ENCODE measurements at regions of chr14 and their contacts with region 1.

Region 1: GRCh38 chr14:101120641-101121507 is 217.4 kb upstream of the RTL1 start:
- DNase-seq: peak; percentile 43
- ATAC-seq: peak; percentile 85
- H3K4me3 Mint-ChIP-seq: peak overlapping the region; percentile 91
- H3K27ac Mint-ChIP-seq: peak overlapping the region; percentile 96
- H3K4me1 Mint-ChIP-seq: peaks cover 33% of the 10 kb centered on the region
- H3K27me3 Mint-ChIP-seq: no peaks in the 10 kb centered on the region
- CTCF ChIP-seq: no peak

Region 2: GRCh38 chr14:100994082-100994481 is 126.8 kb before region 1 on chr14:
- CTCF ChIA-PET with region 1: no interaction called
- POLR2A ChIA-PET with region 1: no interaction called
- intact Hi-C with region 1: no loop called
- DNase-seq: no peak
- ATAC-seq: no peak
- H3K4me3 Mint-ChIP-seq: no peak overlapping the region
- H3K27ac Mint-ChIP-seq: no peak overlapping the region
- H3K4me1 Mint-ChIP-seq: no peaks in the 10 kb centered on the region
- H3K27me3 Mint-ChIP-seq: no peaks in the 10 kb centered on the region
- CTCF ChIP-seq: no peak

Region 3: DNA sequence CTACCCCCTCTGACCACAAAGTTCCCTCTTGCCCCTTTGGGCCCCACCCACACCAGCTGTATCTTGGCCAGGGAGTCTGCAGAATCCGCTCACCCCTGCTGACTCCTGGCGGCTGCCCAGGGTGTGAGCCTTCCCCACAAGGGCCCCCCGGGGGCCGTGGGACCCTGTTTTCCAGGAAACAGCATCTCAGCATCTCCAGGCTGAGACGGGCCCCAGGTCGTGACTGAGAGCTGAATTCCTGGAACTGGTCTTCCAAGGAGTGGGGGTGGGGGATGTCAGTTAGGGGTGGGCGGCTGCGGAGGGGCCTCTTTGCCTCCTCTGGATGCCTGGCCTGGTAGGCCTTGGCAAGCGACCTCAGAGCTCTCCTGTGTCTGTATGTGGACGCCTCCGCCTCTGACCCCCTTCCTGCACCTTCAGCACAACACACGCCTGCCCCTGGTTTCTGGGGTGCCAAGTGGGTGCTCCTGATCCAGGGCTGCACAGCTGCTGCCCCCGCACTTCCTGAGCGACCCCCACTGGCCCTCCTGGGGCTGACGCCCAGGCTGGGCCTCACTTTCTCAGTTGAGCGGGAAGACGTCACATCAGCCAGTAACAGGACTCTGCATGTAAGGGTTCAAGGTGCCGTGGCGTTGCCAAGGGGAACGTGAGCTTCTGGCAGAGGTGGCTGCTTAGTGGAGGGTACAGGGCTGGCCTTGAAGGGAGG is 104.7 kb after region 1 on chr14:
- CTCF ChIA-PET with region 1: no interaction called
- POLR2A ChIA-PET with region 1: no interaction called
- intact Hi-C with region 1: no loop called
- DNase-seq: no peak
- ATAC-seq: no peak
- H3K4me3 Mint-ChIP-seq: no peak overlapping the region
- H3K27ac Mint-ChIP-seq: no peak overlapping the region
- H3K4me1 Mint-ChIP-seq: no peaks in the 10 kb centered on the region
- H3K27me3 Mint-ChIP-seq: peaks cover 2% of the 10 kb centered on the region
- CTCF ChIP-seq: no peak

Region 4: DNA sequence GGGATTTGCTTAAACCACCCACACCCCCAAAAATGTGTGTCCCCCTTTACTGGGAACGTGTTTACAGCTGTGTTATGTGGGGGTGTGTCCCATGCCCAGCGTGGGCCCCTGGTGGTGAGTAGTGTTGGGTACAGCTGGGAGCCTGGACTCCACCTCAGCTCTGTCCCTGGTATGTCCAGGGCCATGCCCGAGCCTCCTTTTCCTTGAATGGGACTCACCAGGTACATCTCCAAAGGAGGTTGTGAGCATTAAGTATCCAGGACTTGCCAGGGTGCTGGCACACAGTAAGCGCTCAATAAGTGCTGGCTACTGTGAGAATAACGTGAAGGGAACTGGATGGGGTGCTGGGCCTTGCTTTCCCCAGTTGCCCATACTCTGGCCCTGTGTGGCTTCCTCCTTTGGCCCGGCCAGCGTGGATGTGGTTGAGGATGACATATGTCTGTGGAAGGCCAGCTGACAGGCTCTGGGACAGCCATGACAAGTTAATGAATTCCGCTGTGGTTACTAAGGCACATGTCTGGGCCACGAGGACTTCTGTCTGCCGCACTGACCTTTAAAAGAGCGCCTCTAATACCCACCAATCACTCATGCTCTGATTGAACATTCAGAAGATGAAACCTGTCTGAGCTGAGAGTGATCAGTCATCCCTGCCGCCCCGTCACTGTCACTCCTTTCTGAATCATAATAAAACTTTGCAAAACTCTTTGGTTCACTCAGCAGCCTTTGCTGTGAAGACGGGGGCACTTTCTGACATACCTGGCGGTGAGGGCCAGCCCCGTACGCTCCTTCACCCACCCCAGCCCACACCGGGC is 515.1 kb after region 1 on chr14:
- CTCF ChIA-PET with region 1: no interaction called
- POLR2A ChIA-PET with region 1: no interaction called
- intact Hi-C with region 1: loop called (anchors 10 kb)
- DNase-seq: no peak
- ATAC-seq: no peak
- H3K4me3 Mint-ChIP-seq: no peak overlapping the region
- H3K27ac Mint-ChIP-seq: no peak overlapping the region
- H3K4me1 Mint-ChIP-seq: no peaks in the 10 kb centered on the region
- H3K27me3 Mint-ChIP-seq: peaks cover 41% of the 10 kb centered on the region
- CTCF ChIP-seq: no peak

Measured in activated B cell treated with CpG ODN at 0.5 μM for 24 hours (primary cell).